Ascending aorta (tissue), 2 donors: ENCODE measurements at regions of chr19 and their contacts with region 1.

Region 1: GRCh38 chr19:54203151-54203611 is 2.5 kb downstream of the RPS9 start:
- DNase-seq: no peak
- H3K4me3 ChIP-seq: no peak overlapping the region
- H3K27ac ChIP-seq: no peak overlapping the region
- H3K4me1 ChIP-seq: peaks cover 6 to 23% of the 10 kb centered on the region in 2 donors
- H3K27me3 ChIP-seq: no peaks in the 10 kb centered on the region
- CTCF ChIP-seq: no peak

Region 2: DNA sequence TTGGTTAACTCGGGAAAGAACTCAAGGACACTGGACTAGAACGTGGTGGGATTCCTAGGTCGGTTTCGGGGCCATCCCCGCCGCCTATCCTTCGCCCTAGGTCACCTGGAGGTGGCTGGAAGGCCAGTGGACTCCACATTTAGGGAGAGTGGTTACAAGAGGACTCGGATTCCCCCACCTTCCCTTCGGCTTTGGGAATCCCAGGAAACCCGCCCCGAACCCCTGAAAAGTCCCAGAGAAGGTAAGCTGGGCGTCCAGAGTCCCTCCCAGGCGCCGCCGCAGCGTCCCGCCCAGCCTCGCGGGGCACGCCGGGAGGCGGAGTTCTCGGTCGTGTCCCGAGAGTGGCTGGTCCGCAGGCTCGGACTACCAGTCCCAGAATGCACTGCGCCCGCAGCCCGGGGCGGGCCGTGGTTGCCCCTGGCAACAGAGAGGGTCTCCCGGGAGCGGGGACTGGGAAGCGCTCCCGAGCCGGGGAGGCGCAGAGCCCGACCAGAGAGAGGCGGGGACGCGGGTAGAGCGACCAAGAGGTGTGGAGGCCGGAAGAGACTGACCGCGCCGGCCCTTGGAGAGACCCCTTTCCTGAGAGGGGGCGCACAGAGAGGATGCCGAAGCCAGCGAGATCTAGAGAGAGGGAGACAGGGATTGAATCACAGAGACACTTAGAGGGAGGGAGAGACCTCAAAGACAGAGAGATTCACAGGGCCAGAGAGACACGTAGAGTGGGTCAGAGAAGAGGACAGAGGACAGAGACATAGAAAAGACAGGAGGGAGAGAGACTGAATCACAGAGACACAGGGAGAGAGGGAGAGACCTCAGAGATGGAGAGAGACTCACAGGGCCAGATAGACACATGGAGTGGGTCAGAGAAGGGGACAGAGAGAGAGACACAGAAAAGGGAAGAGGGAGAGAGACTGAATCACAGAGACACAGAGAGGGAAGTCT is 323.8 kb before region 1 on chr19:
- intact Hi-C with region 1: loop called (anchors 5 kb)
- DNase-seq: peak; percentile 66 to 97
- H3K4me3 ChIP-seq: peak overlapping the region; percentile 61 to 67
- H3K27ac ChIP-seq: no peak overlapping the region
- H3K4me1 ChIP-seq: peaks cover 6 to 30% of the 10 kb centered on the region in 2 donors
- H3K27me3 ChIP-seq: peaks cover 21% of the 10 kb centered on the region
- CTCF ChIP-seq: no peak

Region 3: GRCh38 chr19:54159352-54160181 is 43.6 kb before region 1 on chr19 and contains the start of gene LENG1:
- intact Hi-C with region 1: loop called (anchors 2 kb)
- DNase-seq: peak; percentile 100
- H3K4me3 ChIP-seq: peak within 1 kb of the TSS; percentile 65 to 83
- H3K27ac ChIP-seq: peak within 1 kb of the TSS; percentile 89 to 93
- H3K4me1 ChIP-seq: peaks cover 15 to 21% of the 10 kb centered on the region in 2 donors
- H3K27me3 ChIP-seq: peaks cover 4% of the 10 kb centered on the region
- CTCF ChIP-seq: peak; percentile 28 to 49 (median 36)
- total RNA-seq, gene LENG1: 2.7 TPM

Region 4: DNA sequence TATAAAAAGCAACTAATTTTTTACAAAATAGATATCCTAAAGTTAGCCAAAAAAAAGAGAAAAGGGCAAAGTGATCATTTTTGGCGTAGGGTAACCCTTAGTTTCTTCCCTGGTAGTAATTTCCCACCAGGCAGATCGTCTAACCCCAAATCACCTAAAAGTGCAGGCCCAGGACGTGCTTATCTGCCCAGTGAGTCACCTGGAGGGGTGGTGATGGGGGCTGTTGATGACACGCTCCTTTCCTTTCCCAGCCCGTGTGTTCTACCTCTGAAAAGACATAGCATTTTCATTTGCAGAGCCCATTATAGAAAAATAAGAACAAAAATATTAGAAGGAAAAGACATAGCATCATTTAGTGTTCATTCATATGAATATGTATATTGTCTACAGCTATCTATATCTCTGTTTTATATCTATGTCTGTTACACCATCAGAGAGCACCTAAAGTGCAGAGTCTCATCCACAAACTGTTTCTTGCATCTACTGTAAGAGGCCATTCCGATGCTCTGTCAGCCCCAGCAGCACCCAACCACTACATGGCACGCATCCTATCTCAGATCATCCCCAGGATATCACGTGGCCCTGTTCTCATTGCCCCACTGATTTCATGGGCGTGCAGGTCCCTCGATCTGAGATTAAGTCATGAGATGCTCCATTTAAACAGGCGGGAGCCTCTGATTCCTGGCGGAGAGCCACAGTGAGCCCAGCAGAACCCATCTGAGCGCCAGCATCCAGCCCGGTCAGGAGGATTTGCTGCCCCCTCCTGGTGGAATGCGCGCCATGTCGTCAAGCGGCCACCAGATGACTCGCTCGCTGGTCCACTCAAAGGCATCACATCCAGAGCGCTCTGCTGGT is 28.1 kb after region 1 on chr19:
- intact Hi-C with region 1: loop called (anchors 2 kb)
- DNase-seq: peak in 1 of 2 donors; percentile 87
- H3K4me3 ChIP-seq: no peak overlapping the region
- H3K27ac ChIP-seq: no peak overlapping the region
- H3K4me1 ChIP-seq: no peaks in the 10 kb centered on the region
- H3K27me3 ChIP-seq: peaks cover 3% of the 10 kb centered on the region
- CTCF ChIP-seq: peak; percentile 78 to 81 (median 80)

Region 5: GRCh38 chr19:54287456-54287855 is 84.3 kb after region 1 on chr19:
- intact Hi-C with region 1: no loop called
- DNase-seq: no peak
- H3K4me3 ChIP-seq: no peak overlapping the region
- H3K27ac ChIP-seq: no peak overlapping the region
- H3K4me1 ChIP-seq: no peaks in the 10 kb centered on the region
- H3K27me3 ChIP-seq: no peaks in the 10 kb centered on the region
- CTCF ChIP-seq: no peak